Dorsolateral prefrontal cortex (tissue), 120 donors: ENCODE measurements at regions of chr12 and their contacts with region 1.

Region 1: GRCh38 chr12:100741084-100741711 is 53.4 kb upstream of the ANO4 start:
- DNase-seq: peak in 1 of 10 donors; percentile 6
- H3K4me3 ChIP-seq: no peak overlapping the region
- H3K27ac ChIP-seq: no peak overlapping the region
- H3K27me3 ChIP-seq: peaks cover 0 to 10% (median 0%) of the 10 kb centered on the region in 45 donors
- CTCF ChIP-seq: peak; percentile 38 to 96 (median 74)

Region 2: GRCh38 chr12:100348657-100349454 is 392.3 kb before region 1 on chr12:
- intact Hi-C with region 1: loop called in 1 of 2 experiments (anchors 10 kb)
- DNase-seq: no peak
- H3K4me3 ChIP-seq: no peak overlapping the region
- H3K27ac ChIP-seq: no peak overlapping the region
- H3K27me3 ChIP-seq: peaks cover 0 to 6% (median 0%) of the 10 kb centered on the region in 45 donors
- CTCF ChIP-seq: peak in 54 of 56 donors; percentile 19 to 85 (median 58)

Region 3: GRCh38 chr12:100539202-100539601 is 202.0 kb before region 1 on chr12:
- intact Hi-C with region 1: no loop called
- DNase-seq: no peak
- H3K4me3 ChIP-seq: no peak overlapping the region
- H3K27ac ChIP-seq: no peak overlapping the region
- H3K27me3 ChIP-seq: peaks cover 0 to 9% (median 0%) of the 10 kb centered on the region in 45 donors
- CTCF ChIP-seq: no peak

Region 4: DNA sequence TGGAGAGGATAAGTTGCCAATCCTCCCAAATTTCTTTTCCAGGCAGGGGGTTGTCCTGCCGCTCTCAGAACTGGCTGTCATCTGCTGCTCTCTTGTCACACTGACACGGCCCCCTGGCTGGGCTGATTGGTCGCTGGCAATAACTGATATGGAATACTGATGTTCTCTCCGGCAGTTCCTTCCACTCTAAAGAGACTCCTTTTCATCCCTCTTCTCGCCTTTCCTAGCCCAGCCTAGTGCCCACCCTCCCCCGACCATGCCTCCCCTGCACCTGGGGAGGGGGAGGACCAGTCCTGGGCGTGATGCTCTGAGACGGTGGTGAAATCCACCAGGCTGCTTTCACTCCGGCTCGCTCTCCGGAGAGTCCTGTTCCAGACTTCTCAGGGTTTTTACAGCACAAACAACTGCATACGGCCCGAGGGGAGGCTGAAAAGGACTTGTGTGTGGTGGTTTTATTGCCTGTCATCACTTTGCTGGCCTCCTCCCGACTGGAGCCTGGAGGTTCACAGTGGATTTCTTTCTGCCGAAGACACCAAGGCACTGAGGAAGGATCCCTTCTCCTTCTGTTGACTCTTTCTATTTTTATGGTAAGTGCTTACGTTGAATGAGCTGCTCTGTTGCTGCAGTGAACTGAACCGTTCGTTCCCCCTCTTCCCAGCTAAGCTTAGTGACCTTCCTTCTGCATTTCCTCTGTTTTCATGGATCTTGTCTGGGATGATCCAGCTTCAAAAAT is 53.4 kb after region 1 on chr12 and contains the start of gene ANO4:
- intact Hi-C with region 1: loop called in 1 of 2 experiments (anchors 2 kb)
- DNase-seq: peak; percentile 3 to 68 (median 64)
- H3K4me3 ChIP-seq: peak within 1 kb of the TSS; percentile 44 to 87 (median 69)
- H3K27ac ChIP-seq: peak within 1 kb of the TSS; percentile 1 to 97 (median 91)
- H3K27me3 ChIP-seq: no peaks in the 10 kb centered on the region
- CTCF ChIP-seq: peak in 2 of 56 donors; percentile 6 to 17
- total RNA-seq, gene ANO4: 23.4 to 77.0 (median 37.6) TPM